AG04450 (cell line): ENCODE measurements at regions of chr6 and their contacts with region 1.

Region 1: DNA sequence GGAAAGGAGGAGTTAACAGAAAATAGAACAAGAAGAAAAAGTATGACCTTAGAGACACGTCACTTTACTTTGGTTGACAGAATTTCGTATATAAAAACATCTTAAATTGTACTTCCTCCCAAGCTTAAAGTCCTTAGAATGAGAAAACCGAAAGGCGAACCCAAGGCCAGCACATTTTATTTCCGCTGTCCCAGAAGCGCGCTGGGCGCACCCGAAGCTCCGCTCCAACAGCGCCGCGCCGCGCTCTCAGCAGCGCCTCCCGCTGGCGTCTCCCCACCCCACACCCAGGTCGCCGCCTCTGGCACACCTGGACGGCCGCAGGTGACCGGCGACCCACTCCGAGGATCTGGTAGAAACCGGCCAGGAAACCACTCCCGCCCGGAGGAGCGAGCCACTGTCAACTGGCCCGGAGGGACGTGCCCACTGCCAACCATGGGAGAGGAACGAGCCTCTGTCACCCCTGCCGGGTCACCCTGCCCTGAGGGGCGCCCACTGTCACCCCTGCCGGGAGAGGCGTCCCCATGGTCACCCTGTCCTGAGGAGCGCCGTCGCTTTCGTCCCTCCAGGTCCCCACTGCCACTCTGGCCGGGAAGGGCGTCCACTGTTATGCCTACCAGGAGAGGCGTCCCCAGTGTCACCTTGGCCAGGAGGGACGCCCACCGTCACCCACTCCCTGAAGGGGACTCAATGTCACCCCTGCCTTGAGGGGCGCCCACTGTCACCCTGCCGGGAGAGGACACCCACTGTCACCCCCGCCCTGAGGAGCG is 824 bp downstream of the MPC1 start:
- DNase-seq: no peak
- H3K4me3 ChIP-seq: peak overlapping the region; percentile 81
- H3K27ac ChIP-seq: no peak overlapping the region
- H3K27me3 ChIP-seq: no peaks in the 10 kb centered on the region
- CTCF ChIP-seq: peak; percentile 73

Region 2: DNA sequence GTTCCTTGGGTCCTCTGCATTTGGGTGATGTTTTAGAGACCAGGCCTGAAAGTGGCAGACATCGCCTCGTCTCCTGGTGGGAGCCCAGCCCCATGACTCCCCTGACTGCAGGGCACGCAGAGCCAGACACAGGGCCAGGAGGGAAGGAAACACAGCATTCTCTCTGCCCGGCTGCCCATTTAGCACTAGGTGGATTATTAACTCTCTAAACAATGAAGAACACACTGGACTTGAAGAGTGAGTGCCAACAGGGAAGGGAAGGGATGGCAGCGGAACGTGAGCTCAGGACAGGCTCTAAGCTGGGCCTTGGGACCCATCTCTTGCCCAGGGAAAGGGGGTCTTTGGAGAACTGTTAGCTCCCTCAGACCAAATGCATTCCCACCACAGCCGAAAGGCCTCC is 294.7 kb before region 1 on chr6:
- CTCF ChIA-PET with region 1: no interaction called
- POLR2A ChIA-PET with region 1: no interaction called
- DNase-seq: no peak
- H3K4me3 ChIP-seq: no peak overlapping the region
- H3K27ac ChIP-seq: no peak overlapping the region
- H3K27me3 ChIP-seq: no peaks in the 10 kb centered on the region
- CTCF ChIP-seq: no peak

Region 3: GRCh38 chr6:166275714-166276166 is 106.2 kb before region 1 on chr6:
- CTCF ChIA-PET with region 1: interaction called, 18 read pairs
- POLR2A ChIA-PET with region 1: no interaction called
- DNase-seq: no peak
- H3K4me3 ChIP-seq: no peak overlapping the region
- H3K27ac ChIP-seq: no peak overlapping the region
- H3K27me3 ChIP-seq: peaks cover 3% of the 10 kb centered on the region
- CTCF ChIP-seq: peak; percentile 99

Region 4: DNA sequence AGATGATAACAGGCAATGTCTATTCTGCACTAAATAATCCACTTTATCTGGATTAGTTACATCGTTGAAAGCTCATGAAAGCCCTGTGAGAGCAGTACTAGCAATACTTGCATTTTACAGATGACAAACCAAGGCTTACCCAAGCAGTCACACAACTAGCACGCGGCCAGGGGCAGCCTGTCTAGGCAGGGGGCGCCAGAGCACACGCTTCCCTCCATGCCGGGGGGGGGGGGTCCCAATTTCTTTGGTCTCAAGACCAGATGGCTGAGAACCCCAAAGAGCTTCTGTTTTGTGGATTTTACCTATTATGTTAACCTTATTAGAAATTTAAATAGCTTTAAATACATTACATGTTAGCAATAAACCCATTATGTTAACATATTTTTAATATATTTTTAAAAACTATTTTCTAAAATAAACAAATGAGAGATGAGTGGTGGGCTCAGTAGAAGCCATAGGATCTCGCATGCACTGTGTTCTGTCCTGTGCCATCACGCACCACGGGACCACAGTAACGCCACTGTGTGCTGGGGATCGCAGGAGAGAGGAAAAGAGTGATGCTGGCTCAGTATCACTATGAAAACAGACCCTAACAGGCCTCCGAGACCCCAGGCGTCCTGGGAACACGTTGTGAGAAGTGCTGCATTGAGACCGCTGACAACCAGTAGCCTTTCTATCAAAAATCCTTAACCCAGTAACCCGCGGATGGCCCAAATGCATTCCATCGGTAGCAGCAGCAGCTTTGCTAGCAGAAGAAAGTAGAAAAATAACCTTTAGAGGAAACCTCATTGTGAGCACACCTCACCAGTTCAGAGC is 68.5 kb before region 1 on chr6:
- CTCF ChIA-PET with region 1: interaction called, 34 read pairs
- POLR2A ChIA-PET with region 1: no interaction called
- DNase-seq: no peak
- H3K4me3 ChIP-seq: no peak overlapping the region
- H3K27ac ChIP-seq: no peak overlapping the region
- H3K27me3 ChIP-seq: peaks cover 17% of the 10 kb centered on the region
- CTCF ChIP-seq: peak; percentile 78

Region 5: DNA sequence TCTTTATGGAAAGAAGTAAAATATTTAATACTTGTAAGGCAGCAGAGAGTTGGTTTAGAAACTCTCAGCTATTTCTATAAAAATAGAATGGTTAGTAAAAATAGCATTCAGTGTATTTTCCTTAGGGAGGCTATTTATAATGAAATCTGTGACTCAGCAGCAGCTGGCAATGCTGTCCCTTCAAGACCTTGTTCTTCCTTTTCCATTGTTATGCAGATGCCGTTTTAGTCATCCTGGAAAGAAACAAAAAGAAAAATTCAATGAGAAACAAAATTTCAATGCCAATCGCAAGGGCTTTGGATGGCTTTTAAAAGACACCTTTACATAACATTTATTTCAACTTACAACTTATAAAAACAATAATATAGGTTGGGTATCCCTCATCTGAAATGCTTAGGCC is 16.7 kb before region 1 on chr6:
- CTCF ChIA-PET with region 1: interaction called, 15 read pairs
- POLR2A ChIA-PET with region 1: no interaction called
- DNase-seq: no peak
- H3K4me3 ChIP-seq: no peak overlapping the region
- H3K27ac ChIP-seq: no peak overlapping the region
- H3K27me3 ChIP-seq: no peaks in the 10 kb centered on the region
- CTCF ChIP-seq: no peak

Region 6: DNA sequence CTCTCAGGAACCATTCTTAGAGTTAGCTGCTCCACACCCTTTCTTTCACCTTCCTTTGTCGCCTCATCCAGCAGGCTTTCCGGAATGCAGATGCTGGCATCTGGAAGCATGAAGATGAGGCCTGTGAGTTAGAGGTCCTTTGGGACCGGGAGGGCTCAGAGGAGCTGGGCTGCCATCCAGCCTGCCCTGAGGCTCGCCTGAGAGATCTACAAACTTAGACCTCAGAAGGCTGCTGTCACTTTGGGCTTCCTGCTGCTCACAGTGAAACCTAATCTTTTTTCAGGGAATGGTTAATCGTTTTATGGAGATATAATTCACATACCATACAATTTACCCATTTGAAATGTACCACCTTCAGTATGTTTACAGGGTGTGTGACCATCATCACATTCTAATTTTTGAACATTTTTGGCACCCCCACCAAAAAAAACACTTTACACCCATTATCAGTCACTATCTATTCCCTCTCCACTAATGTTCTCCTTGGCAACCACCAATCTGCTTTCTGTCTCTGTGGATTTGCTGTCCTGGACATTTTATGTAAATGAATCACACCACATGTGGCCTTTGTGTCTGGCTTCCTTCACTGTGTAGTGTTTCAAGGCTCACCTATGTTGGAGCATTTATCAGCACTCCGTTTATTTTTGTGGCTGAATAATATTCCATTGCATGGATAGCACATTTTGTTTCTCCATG is 20.8 kb after region 1 on chr6:
- CTCF ChIA-PET with region 1: interaction called, 16 read pairs
- POLR2A ChIA-PET with region 1: no interaction called
- DNase-seq: no peak
- H3K4me3 ChIP-seq: no peak overlapping the region
- H3K27ac ChIP-seq: no peak overlapping the region
- H3K27me3 ChIP-seq: peaks cover 7% of the 10 kb centered on the region
- CTCF ChIP-seq: no peak

Region 7: GRCh38 chr6:166499350-166500163 is 117.6 kb after region 1 on chr6:
- CTCF ChIA-PET with region 1: no interaction called
- POLR2A ChIA-PET with region 1: no interaction called
- DNase-seq: no peak
- H3K4me3 ChIP-seq: no peak overlapping the region
- H3K27ac ChIP-seq: no peak overlapping the region
- H3K27me3 ChIP-seq: no peaks in the 10 kb centered on the region
- CTCF ChIP-seq: no peak

Region 8: DNA sequence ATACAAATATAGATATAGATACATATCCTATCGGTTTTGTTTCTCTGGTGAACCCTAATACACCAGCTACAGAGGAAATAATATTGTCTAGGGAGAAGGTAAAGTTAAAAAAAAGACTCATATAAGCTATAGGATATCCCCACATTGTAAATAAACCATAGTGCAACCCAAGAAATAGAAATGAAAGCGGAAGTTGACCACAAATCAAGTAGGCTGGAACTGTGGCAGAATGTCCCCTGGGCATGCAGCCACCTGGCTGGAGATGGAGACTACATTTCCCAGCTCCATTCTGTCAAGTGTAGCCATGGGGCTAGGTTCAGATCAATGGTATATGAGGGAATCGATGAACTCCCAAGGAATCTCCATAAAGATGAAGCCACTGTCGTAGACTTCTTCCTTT is 315.2 kb after region 1 on chr6:
- CTCF ChIA-PET with region 1: no interaction called
- POLR2A ChIA-PET with region 1: no interaction called
- DNase-seq: no peak
- H3K4me3 ChIP-seq: no peak overlapping the region
- H3K27ac ChIP-seq: no peak overlapping the region
- H3K27me3 ChIP-seq: peaks cover 8% of the 10 kb centered on the region
- CTCF ChIP-seq: no peak

Region 9: DNA sequence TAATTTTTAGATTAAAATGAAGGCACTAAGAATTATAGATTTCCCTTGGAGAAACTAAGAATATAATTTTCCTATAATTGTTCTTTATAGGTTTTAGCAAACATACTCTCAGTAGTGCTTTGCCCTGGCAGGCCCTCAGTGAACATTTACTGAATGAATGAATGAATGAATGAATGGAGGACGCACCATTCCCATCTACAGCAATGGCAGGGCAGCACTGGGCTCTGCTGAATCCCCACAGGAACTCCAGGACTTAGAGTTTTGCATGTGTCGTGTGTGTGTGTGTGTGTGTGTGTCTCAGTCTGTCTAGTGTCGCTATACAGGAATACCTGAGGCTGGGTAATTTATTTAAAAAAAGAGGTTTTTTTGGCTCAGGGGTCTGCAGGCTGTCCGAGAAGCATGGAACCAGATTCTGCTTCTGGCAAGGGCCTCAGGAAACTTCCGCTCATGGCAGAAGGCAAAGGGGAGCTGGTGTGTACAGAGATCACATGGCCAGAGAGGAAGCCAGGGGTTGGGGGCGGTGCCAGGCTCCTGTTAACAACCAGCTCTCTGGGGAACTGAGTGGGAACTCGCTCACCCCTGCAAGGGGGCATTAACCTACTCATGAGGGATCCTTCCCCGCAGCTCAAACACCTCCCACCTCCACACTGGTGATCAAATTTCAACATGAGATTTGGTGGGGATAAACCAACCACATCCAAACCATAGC is 554.3 kb after region 1 on chr6:
- CTCF ChIA-PET with region 1: no interaction called
- POLR2A ChIA-PET with region 1: no interaction called
- DNase-seq: no peak
- H3K4me3 ChIP-seq: no peak overlapping the region
- H3K27ac ChIP-seq: no peak overlapping the region
- H3K27me3 ChIP-seq: no peaks in the 10 kb centered on the region
- CTCF ChIP-seq: no peak